ENCODE measurements at regions of chr2 and their contacts with region 1.

Region 1: GRCh38 chr2:85327822-85328617 is at the start of gene TGOLN2:
- DNase-seq: peak; percentile 75 to 94 (median 89)
- H3K4me3 ChIP-seq: peak within 1 kb of the TSS; percentile 44 to 94 (median 79)
- H3K27ac ChIP-seq: peak within 1 kb of the TSS; percentile 72 to 100 (median 96)
- H3K27me3 ChIP-seq: no peaks in the 10 kb centered on the region
- CTCF ChIP-seq: peak in 44 of 56 donors; percentile 3 to 62 (median 32)
- total RNA-seq, gene TGOLN2: 90.8 to 148 (median 114) TPM

Region 2: GRCh38 chr2:85266146-85267041 is 61.6 kb before region 1 on chr2:
- intact Hi-C with region 1: no loop called
- DNase-seq: peak in 8 of 10 donors; percentile 34 to 66 (median 56)
- H3K4me3 ChIP-seq: no peak overlapping the region
- H3K27ac ChIP-seq: no peak overlapping the region
- H3K27me3 ChIP-seq: no peaks in the 10 kb centered on the region
- CTCF ChIP-seq: peak; percentile 43 to 92 (median 81)

Region 3: DNA sequence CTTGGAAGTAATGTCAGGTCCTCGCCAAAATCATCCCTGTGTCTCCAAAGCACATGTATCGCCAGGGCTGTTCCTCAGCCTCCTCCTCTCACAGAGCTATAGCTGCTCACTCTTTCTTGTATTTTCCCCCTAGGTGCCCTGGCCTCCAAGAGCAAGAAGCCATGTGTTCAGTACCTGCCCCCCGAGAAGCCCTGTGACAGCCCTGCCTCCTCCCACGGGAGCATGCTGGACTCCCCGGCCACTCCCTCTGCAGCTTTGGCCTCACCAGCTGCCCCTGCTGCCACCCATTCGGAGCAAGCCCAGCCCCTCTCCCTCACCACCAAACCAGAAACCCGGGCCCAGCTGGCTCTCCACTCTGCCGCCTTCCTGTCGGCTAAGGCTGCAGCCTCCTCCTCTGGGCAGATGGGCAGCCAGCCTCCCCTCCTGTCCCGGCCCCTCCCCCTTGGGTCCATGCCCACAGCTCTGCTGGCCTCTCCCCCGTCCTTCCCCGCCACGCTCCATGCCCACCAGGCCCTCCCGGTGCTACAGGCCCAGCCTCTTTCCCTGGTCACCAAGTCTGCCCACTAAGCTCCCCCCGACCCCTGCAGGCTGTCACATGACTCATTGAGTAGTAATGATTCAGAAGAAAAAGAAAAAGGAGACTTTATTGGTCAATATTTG is 19.0 kb before region 1 on chr2:
- intact Hi-C with region 1: loop called in 1 of 2 experiments (anchors 2 kb)
- DNase-seq: peak in 7 of 10 donors; percentile 31 to 70 (median 52)
- H3K4me3 ChIP-seq: peak overlapping the region in 25 of 59 donors; percentile 4 to 48 (median 24)
- H3K27ac ChIP-seq: peak overlapping the region in 41 of 59 donors; percentile 0 to 77 (median 51)
- H3K27me3 ChIP-seq: no peaks in the 10 kb centered on the region
- CTCF ChIP-seq: no peak

Region 4: GRCh38 chr2:85394261-85394681 is 66.3 kb after region 1 on chr2:
- intact Hi-C with region 1: no loop called
- DNase-seq: peak in 9 of 10 donors; percentile 38 to 78 (median 64)
- H3K4me3 ChIP-seq: peak overlapping the region in 2 of 59 donors; percentile 3 to 22
- H3K27ac ChIP-seq: peak overlapping the region; percentile 7 to 92 (median 82)
- H3K27me3 ChIP-seq: no peaks in the 10 kb centered on the region
- CTCF ChIP-seq: peak in 3 of 56 donors; percentile 9 to 16 (median 14)

Region 5: DNA sequence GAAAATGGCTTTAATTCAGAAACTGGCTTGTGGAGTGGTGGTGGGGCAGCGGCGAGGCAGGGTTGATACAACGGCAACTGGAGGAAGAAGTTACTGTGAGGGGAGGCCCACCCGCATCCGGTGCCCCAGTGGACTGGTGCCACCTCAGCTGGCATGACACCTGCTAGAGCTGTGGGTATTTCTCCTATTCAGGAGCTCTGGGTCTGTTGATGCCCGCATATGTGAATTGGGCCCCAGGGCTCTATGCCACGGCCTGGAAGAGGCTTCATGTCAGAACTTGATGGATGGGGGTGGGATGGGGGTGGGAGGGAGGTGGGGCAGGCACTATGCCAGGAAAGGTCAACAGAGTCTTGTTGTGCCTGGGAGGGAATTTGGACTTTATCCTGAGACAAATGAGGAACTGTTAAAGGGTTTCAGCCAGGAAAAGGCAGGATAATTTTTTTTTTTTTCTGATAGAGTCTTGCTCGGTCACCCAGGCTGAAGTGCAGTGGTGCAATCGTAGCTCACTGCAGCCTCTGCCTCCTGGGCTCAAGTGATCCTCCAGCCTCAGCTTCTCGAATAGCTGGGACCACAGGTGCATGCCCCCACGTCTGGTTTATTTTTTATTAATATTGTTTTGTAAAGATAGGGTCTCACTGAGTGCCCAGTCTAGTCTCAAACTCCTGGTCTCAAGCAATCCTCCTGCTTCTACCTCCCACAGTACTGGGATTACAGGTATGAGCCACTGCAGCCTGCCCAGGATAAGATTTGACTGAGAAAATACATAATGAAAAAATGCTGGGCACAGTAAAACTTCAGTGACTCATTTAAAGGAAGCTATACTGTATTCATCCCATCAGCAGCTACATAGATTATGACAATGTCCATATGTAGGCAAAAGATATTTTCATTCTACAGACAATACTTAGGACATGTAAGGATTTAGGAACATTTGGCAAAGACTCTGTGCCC is 143.1 kb after region 1 on chr2:
- intact Hi-C with region 1: no loop called
- DNase-seq: peak in 1 of 10 donors; percentile 20
- H3K4me3 ChIP-seq: no peak overlapping the region
- H3K27ac ChIP-seq: peak overlapping the region in 1 of 59 donors; percentile 27
- H3K27me3 ChIP-seq: no peaks in the 10 kb centered on the region
- CTCF ChIP-seq: no peak